Mammary epithelial cell (primary cell): ENCODE measurements at regions of chr4 and their contacts with region 1.

Region 1: DNA sequence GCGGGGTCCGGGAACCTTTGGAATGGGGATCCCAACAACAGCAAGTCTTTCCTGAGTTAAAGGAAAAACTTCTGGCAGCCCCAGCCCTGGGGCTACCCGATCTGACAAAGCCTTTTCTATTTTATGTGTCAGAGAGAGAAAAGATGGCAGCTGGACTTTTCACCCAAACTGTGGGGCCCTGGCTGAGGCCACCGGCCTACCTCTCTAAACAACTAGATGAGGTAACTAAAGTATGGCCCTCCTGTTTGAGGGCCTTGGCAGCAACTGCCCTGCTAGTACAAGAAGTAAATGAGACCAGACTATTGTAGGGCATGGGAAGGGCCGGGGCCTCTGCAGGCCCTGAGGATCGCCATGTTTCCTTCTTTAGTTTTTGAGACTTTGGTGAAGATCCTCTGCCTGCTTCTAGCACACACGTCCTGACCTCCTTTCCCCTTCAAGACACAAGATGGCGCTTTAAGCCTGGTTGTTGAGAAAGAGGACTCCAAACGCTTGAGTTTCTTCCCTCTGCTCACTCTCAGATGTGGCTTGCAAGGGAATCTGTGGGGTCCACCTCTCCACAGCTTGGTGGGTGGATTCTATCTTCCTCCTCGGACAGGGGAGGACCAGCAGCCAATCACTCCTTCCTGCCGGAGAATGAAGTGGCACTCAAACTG is 18.5 kb upstream of the DRD5 start:
- DNase-seq: peak; percentile 68
- H3K4me3 ChIP-seq: no peak overlapping the region
- H3K27ac ChIP-seq: no peak overlapping the region
- H3K4me1 ChIP-seq: no peaks in the 10 kb centered on the region
- H3K27me3 ChIP-seq: no peaks in the 10 kb centered on the region
- CTCF ChIP-seq: peak; percentile 64 to 84

Region 2: DNA sequence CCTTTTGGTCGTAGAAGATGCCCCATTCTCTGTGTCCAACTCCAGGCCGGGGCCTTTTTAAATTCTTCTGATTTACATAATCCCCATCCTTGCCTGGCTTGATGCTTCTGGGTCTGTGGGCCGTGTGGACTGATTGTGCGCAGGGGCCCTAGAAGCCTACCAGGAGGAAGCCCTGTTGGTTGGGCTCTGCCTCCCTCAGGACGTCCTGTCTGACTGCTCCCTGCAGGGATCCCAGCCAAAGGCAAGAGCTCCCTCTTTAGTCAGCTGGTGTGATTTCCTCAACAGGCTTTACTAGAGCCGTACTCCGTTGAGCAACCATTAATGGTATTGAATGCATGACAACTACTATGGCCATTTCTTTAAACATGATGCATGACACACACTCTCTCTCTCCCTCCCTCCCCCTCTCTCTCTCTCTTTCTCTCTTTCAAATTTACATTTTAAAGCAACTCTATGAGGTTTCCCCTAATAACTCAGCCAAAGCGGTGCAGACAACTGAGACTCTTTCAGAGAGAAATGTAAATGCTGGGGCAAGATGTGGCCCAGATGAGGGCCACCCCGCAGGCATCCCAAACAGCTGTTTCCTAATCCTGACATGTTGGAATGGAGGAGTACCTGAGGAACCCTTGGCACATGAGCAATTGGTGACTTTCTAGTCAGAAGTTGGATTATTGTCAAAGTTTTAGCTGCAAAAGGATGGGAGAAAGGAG is 135.8 kb after region 1 on chr4:
- CTCF ChIA-PET with region 1: interaction called, 5 read pairs
- dilution Hi-C with region 1: no loop called
- in situ Hi-C with region 1: no loop called
- intact Hi-C with region 1: loop called (anchors 2 kb)
- DNase-seq: peak; percentile 17
- H3K4me3 ChIP-seq: no peak overlapping the region
- H3K27ac ChIP-seq: no peak overlapping the region
- H3K4me1 ChIP-seq: no peaks in the 10 kb centered on the region
- H3K27me3 ChIP-seq: no peaks in the 10 kb centered on the region
- CTCF ChIP-seq: peak in 1 of 2 donors; percentile 3

Region 3: GRCh38 chr4:10013722-10014121 is 250.8 kb after region 1 on chr4:
- CTCF ChIA-PET with region 1: interaction called, 4 read pairs
- dilution Hi-C with region 1: no loop called
- in situ Hi-C with region 1: loop called (anchors 5 kb)
- intact Hi-C with region 1: loop called (anchors 1 kb)
- DNase-seq: peak; percentile 43
- H3K4me3 ChIP-seq: no peak overlapping the region
- H3K27ac ChIP-seq: no peak overlapping the region
- H3K4me1 ChIP-seq: peaks cover 26% of the 10 kb centered on the region
- H3K27me3 ChIP-seq: no peaks in the 10 kb centered on the region
- CTCF ChIP-seq: peak; percentile 58 to 84

Region 4: DNA sequence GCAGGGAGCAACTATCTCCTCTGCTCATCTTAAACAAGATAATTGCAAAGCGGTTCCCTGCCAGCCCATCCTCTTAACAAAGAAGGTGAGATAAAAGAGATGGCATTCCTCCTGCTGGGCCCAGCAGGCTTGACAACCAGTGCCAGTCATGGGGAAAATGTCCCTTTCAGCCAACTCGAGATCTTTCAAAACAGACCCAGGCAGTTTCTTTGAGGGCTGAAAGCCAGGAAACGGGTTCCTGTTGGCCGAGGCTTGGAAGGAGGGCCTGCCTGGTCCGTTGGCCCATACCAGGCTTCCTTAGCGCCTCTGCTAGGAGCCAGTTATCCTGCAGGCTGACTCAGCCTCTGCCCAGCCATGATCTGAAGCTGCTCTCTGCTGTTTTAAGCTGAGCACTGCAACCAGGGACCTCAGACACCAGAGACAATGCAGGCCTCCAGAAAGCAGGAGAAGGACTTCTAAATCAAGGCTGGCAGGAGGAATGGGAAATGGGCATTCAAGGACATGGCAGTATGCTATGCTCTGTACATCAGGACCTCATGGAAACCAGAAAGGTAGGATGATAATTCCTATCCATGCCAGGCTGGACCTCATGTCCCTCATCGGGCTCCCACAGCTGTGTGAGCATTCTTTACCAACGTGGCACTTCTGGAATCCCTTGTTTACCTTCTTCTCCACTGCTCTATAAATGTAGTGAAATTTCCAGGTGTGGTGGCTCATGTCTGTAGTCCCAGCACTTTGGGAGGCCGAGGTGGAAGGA is 300.8 kb after region 1 on chr4:
- CTCF ChIA-PET with region 1: no interaction called
- dilution Hi-C with region 1: no loop called
- in situ Hi-C with region 1: loop called (anchors 5 kb)
- intact Hi-C with region 1: loop called (anchors 1 kb)
- DNase-seq: peak; percentile 70
- H3K4me3 ChIP-seq: no peak overlapping the region
- H3K27ac ChIP-seq: no peak overlapping the region
- H3K4me1 ChIP-seq: peaks cover 9% of the 10 kb centered on the region
- H3K27me3 ChIP-seq: no peaks in the 10 kb centered on the region
- CTCF ChIP-seq: peak; percentile 95

Region 5: DNA sequence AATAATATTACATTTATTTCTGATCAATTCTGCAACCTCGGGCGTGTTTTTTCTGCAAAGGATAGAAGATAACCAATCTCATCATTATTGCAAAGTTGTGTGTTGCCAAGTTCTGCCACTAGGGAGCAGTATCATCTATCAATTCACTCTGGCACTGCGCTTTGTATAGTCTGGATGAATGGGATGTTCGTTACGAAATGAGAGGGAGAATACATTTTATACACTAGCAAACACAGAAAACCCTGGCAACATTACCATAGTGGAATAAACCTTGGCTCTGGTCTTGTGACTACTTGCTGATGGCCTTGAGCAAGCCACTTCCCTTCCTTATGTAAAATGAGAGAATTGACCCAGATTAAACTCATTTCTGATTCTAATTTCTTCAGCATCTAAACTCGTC is 791.7 kb after region 1 on chr4:
- CTCF ChIA-PET with region 1: no interaction called
- dilution Hi-C with region 1: no loop called
- in situ Hi-C with region 1: loop called in 1 of 2 experiments (anchors 25 kb)
- intact Hi-C with region 1: loop called (anchors 1 kb)
- DNase-seq: peak; percentile 61
- H3K4me3 ChIP-seq: no peak overlapping the region
- H3K27ac ChIP-seq: no peak overlapping the region
- H3K4me1 ChIP-seq: no peaks in the 10 kb centered on the region
- H3K27me3 ChIP-seq: no peaks in the 10 kb centered on the region
- CTCF ChIP-seq: peak; percentile 79 to 82